Pancreas (tissue), 10 donors: ENCODE measurements at regions of chr19 and their contacts with region 1.

Region 1: GRCh38 chr19:38095411-38096308 is 128.4 kb downstream of the DPF1 start:
- DNase-seq: peak; percentile 46 to 80 (median 60)
- ATAC-seq: peak; percentile 74 to 92 (median 83)
- H3K4me3 ChIP-seq: no peak overlapping the region
- H3K27ac ChIP-seq: peak overlapping the region in 1 of 4 donors; percentile 10
- H3K4me1 ChIP-seq: no peaks in the 10 kb centered on the region
- H3K27me3 ChIP-seq: no peaks in the 10 kb centered on the region
- CTCF ChIP-seq: peak; percentile 23 to 62 (median 46)

Region 2: DNA sequence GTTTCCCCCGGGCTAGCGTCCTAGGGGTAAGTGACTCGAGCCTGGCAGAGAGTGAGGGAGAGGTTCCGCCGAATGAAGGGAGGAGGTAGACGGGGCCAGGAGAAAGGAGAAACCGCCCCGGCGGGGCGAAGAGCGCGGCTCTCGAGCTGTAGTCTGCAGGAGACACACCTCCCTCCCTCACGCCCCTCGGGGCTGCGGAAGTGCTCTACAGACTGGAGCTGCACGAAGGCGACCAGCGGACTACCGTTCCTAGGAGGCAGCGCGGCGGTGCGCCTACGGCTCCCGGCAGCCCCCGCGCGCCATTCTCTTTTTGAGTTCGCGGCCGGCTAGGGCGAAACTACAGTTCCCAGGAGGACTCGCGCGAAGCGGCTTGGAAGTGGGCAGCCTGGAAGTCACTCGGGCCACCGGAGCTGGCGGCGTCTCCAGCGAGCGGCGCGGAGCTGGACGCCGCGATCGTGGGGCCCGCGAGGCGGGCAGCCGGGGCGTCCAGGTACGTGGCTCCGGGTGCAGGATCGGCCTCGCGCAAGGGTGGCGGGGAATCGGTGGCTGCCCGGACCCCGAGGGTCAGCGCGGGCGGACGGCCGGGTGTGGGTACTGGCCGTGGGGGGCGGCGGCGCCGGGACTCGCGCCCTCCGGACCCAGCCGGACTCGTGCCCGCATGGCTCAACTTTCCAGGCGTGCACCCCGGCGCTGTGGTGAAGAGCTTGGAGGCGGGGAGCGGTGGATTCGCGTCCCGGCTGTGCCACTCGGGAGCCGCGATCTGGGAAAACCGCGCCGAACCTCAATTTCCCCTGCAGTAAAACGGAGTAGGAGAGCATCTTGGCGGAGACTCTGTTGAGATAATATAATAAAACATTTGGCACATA is 188.6 kb before region 1 on chr19 and contains the start of gene SIPA1L3:
- intact Hi-C with region 1: loop called in 2 of 3 experiments (anchors 5 to 10 kb)
- DNase-seq: peak; percentile 92 to 98 (median 95)
- ATAC-seq: peak; percentile 93 to 96 (median 94)
- H3K4me3 ChIP-seq: peak within 1 kb of the TSS; percentile 88 to 99 (median 98)
- H3K27ac ChIP-seq: peak within 1 kb of the TSS in 3 of 4 donors; percentile 62 to 75 (median 66)
- H3K4me1 ChIP-seq: peaks cover 0 to 3% (median 0%) of the 10 kb centered on the region in 3 donors
- H3K27me3 ChIP-seq: no peaks in the 10 kb centered on the region
- CTCF ChIP-seq: no peak
- total RNA-seq, gene SIPA1L3: 24.3 to 44.8 (median 25.8) TPM